Transverse colon (tissue), 4 donors: ENCODE measurements at regions of chr3 and their contacts with region 1.

Region 1: DNA sequence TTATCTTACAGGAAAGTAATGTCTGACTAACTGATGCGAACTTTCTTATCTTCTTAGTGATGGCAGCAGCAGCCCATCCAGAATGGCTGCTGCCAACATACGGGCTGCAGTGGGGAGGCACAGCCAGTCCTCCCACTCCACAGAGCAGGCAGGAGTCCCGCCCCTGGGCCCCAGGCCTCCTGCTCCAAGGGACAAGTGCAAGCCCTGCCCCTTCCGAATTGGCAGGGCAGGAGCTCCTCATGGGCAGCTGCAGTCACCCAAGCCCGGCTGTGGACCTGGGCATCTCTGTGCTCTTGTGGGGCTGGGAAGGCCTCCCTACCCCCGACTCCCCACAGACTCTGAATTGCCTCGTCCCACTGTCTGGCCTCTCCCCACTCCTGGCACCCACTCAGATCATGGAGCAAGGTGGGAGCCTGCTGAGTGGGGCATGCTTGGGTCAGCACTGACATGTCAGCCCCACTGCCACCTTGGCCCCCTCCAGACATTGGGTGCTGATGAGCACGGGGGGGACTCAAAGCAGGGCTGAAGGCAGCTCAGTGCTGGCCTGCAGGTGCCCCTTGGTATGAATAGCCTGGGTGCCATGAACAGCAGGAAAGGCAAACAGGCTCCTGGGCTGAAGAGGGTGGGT is 618.9 kb upstream of the KCNMB2 start:
- DNase-seq: no peak
- H3K4me3 ChIP-seq: no peak overlapping the region
- H3K27ac ChIP-seq: no peak overlapping the region
- H3K4me1 ChIP-seq: no peaks in the 10 kb centered on the region
- H3K27me3 ChIP-seq: no peaks in the 10 kb centered on the region
- CTCF ChIP-seq: no peak
- EP300 ChIP-seq: no peak
- POLR2A ChIP-seq: no peak

Region 2: DNA sequence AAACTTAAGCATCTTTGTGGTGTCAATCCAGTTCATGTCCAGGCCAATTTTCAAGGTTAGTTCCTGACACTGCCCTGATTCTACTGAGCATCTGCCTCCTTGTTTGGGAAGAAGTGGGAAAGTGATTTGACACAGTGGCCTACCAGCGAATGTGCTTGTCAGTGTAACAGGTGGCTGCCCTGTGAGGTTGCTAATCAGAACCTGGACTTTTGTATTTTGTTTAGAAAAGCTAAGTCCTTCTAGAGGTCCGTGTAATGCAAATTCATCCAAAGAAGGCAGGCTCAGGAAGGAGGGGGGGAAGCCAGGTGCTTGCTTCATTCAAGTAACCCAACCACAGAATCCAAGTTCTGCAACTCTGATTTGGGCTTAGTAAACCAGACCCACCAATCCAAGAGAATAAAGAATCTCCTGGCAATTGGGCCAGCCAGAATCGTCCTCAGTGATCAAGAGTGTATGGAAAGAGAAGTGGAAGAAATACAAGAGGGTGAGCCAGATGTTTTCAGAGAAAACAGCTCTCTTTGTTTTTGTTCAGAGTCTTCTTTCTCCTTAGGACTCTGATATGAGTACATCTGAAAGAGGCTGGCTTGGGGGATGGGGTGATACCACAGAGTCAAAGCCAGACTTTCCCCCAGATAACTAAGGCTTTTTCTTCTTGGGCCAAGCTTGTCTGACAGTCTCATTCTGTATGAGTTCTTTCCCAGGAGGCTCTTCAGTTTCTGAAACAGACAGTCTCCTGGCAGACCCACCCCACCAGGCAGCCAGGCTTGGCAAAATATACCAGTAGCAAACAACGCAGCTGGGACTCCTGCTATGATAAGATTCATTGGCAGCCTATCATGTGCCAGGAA is 211.1 kb before region 1 on chr3:
- in situ Hi-C with region 1: no loop called
- intact Hi-C with region 1: no loop called
- DNase-seq: no peak
- H3K4me3 ChIP-seq: no peak overlapping the region
- H3K27ac ChIP-seq: peak overlapping the region in 2 of 4 donors; percentile 12 to 15
- H3K4me1 ChIP-seq: peaks cover 0 to 4% (median 2%) of the 10 kb centered on the region in 4 donors
- H3K27me3 ChIP-seq: no peaks in the 10 kb centered on the region
- CTCF ChIP-seq: no peak
- EP300 ChIP-seq: no peak
- POLR2A ChIP-seq: no peak

Region 3: DNA sequence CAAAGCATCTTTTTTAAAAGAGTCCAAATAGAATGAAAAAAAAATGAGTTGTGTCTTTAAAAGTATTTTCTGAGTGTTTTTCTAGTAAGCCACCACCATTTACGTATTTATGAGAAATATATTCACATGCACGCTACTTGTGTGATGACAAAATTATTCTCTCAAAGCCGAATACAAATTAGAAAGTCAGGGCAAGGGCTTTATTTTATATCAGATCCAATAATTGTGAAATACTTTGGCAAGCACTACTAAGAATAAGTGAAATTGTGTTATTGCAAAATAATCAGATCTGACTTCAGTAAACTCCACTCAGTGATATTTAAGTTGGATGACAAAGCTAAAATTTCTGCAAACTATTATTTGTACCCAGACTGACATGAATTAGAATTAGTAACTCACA is 29.6 kb after region 1 on chr3:
- in situ Hi-C with region 1: no loop called
- intact Hi-C with region 1: loop called (anchors 1 kb)
- DNase-seq: no peak
- H3K4me3 ChIP-seq: no peak overlapping the region
- H3K27ac ChIP-seq: no peak overlapping the region
- H3K4me1 ChIP-seq: no peaks in the 10 kb centered on the region
- H3K27me3 ChIP-seq: no peaks in the 10 kb centered on the region
- CTCF ChIP-seq: no peak
- EP300 ChIP-seq: no peak
- POLR2A ChIP-seq: no peak

Region 4: GRCh38 chr3:178001670-178002101 is 84.3 kb after region 1 on chr3:
- in situ Hi-C with region 1: no loop called
- intact Hi-C with region 1: no loop called
- DNase-seq: no peak
- H3K4me3 ChIP-seq: no peak overlapping the region
- H3K27ac ChIP-seq: no peak overlapping the region
- H3K4me1 ChIP-seq: no peaks in the 10 kb centered on the region
- H3K27me3 ChIP-seq: no peaks in the 10 kb centered on the region
- CTCF ChIP-seq: no peak
- EP300 ChIP-seq: no peak
- POLR2A ChIP-seq: no peak